PC-9 (cell line): ENCODE measurements at regions of chr18 and their contacts with region 1.

Region 1: GRCh38 chr18:59502274-59503175 is 143.5 kb upstream of the LMAN1 start:
- DNase-seq: no peak
- H3K4me3 ChIP-seq: no peak overlapping the region
- H3K27ac ChIP-seq: no peak overlapping the region
- H3K4me1 ChIP-seq: no peaks in the 10 kb centered on the region
- H3K27me3 ChIP-seq: peaks cover 11% of the 10 kb centered on the region; the same call in 1 of the 2 replicates
- CTCF ChIP-seq: no peak

Region 2: GRCh38 chr18:59478591-59478990 is 23.9 kb before region 1 on chr18:
- CTCF ChIA-PET with region 1: no interaction called
- POLR2A ChIA-PET with region 1: no interaction called
- intact Hi-C with region 1: no loop called
- DNase-seq: no peak
- H3K4me3 ChIP-seq: no peak overlapping the region
- H3K27ac ChIP-seq: no peak overlapping the region
- H3K4me1 ChIP-seq: no peaks in the 10 kb centered on the region
- H3K27me3 ChIP-seq: peaks cover 11% of the 10 kb centered on the region
- CTCF ChIP-seq: no peak

Region 3: GRCh38 chr18:59516356-59517155 is 14.0 kb after region 1 on chr18:
- CTCF ChIA-PET with region 1: no interaction called
- POLR2A ChIA-PET with region 1: interaction called, 18 read pairs
- intact Hi-C with region 1: no loop called
- DNase-seq: peak; percentile 32 to 91
- H3K4me3 ChIP-seq: peak overlapping the region; percentile 8; the same call in 1 of the 2 replicates
- H3K27ac ChIP-seq: peak overlapping the region; percentile 2; the same call in 1 of the 2 replicates
- H3K4me1 ChIP-seq: peaks cover 34% of the 10 kb centered on the region
- H3K27me3 ChIP-seq: no peaks in the 10 kb centered on the region
- CTCF ChIP-seq: no peak